ENCODE measurements at regions of chr2 and their contacts with region 1.

Region 1: GRCh38 chr2:96951093-96951654 is 35.2 kb downstream of the FAM178B start:
- DNase-seq: peak; percentile 56
- H3K4me3 ChIP-seq: no peak overlapping the region
- H3K27ac ChIP-seq: no peak overlapping the region
- H3K4me1 ChIP-seq: no peaks in the 10 kb centered on the region
- H3K27me3 ChIP-seq: peaks cover 0 to 7% of the 10 kb centered on the region in 2 experiments
- CTCF ChIP-seq: peak; percentile 85 to 94
- POLR2A ChIP-seq: no peak

Region 2: DNA sequence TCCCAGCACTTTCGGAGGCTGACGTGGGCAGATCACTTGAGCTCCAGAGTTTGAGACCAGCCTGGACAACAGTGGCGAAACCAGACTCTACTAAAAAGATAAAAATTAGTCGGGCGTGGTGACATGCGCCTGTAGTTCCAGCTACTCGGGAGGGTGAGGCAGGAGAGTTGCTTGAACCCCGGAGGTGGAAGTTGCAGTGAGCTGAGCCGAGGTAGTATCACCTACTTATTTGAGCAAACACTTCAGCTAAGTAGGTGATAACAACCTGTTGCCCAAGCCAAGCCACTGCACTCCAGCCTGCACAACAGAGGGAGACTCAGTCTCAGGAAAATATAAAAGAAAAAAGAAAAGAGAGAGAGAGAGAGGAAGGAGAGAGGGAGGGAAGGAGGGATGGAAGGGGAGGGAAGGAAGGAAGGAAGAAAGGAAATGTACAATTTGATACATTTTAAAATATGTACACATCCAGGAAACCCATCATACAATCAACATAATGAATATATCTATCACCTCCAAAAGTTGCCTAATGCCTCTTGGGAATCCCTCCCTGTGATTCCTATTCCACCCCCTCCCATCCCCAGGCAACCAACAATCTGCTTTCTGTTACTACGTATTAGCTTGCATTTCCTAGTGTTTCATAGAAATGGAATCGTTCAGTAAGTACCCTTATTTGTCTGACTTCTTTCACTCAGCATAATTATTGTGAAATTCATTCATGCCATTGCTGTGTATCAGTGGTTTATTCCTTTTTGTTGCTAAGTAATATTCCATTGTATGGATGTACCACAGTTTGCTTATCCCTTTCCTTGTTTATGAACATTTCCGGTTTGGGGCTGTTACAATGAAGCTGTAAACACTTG is 287.2 kb before region 1 on chr2:
- CTCF ChIA-PET with region 1: no interaction called
- POLR2A ChIA-PET with region 1: no interaction called
- dilution Hi-C with region 1: no loop called
- intact Hi-C with region 1: no loop called
- DNase-seq: no peak
- H3K4me3 ChIP-seq: no peak overlapping the region
- H3K27ac ChIP-seq: no peak overlapping the region
- H3K4me1 ChIP-seq: peaks cover 7% of the 10 kb centered on the region
- H3K27me3 ChIP-seq: no peaks in the 10 kb centered on the region
- CTCF ChIP-seq: no peak
- POLR2A ChIP-seq: no peak

Region 3: GRCh38 chr2:96868555-96869280 is 82.5 kb before region 1 on chr2:
- CTCF ChIA-PET with region 1: interaction called, 10 read pairs
- POLR2A ChIA-PET with region 1: no interaction called
- dilution Hi-C with region 1: no loop called
- intact Hi-C with region 1: no loop called
- DNase-seq: peak; percentile 82
- H3K4me3 ChIP-seq: peak overlapping the region; percentile 59 to 86 (median 65)
- H3K27ac ChIP-seq: no peak overlapping the region
- H3K4me1 ChIP-seq: peaks cover 34% of the 10 kb centered on the region
- H3K27me3 ChIP-seq: peaks cover 10 to 16% of the 10 kb centered on the region in 2 experiments
- CTCF ChIP-seq: peak; percentile 70 to 73
- POLR2A ChIP-seq: peak; percentile 75

Region 4: DNA sequence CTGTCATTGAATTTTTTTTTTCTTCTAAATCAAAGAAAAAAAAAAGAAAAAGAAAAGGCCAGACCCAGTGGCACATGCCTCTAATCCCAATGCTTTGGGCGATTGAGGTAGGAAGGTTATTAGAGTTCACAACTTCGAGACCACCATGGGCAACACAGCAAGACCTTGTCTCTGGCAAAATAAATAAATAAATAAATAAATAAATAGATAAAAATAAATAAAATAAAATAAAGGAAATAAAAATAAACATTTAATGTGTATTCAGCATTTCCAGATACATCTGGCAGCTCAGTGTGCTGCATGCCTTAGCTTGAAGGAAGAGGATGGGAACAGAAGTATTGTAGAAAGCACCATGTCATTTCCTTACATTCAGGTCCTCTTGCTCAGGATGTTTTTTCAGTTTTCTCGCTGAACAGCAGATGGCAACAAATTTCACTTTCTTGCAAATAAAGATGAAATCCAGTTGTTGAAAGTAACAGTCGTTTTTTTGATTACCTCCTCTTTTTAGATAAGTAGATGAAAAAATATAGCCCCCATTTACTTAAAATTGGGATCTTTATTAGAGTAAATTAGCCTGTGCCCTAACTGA is 60.9 kb after region 1 on chr2:
- CTCF ChIA-PET with region 1: no interaction called
- POLR2A ChIA-PET with region 1: no interaction called
- dilution Hi-C with region 1: no loop called
- intact Hi-C with region 1: no loop called
- DNase-seq: peak; percentile 72
- H3K4me3 ChIP-seq: no peak overlapping the region
- H3K27ac ChIP-seq: no peak overlapping the region
- H3K4me1 ChIP-seq: no peaks in the 10 kb centered on the region
- H3K27me3 ChIP-seq: peaks cover 8% of the 10 kb centered on the region in 2 experiments
- CTCF ChIP-seq: peak in 1 of 2 donors; percentile 31
- POLR2A ChIP-seq: no peak

Region 5: DNA sequence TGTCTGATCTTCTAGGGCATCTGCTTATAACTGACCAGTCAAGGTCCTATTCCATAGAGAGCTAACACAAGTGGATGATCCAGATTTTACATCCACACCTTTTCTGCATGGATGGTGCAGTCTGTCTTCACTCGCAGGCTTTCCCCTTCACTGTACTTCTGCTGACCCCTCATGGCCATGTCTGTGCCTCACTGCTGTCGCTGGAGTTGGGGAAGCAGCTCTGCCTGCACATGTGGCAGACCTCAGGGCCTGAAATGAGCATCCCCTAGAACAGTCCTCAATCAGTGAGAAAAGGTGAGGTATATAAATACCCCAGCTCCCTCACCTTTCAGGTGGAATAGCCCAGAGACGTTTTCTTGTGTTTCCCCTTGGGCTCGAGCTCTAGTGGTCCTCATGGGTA is 404.7 kb after region 1 on chr2:
- CTCF ChIA-PET with region 1: no interaction called
- POLR2A ChIA-PET with region 1: no interaction called
- dilution Hi-C with region 1: no loop called
- intact Hi-C with region 1: no loop called
- DNase-seq: no peak
- H3K4me3 ChIP-seq: no peak overlapping the region
- H3K27ac ChIP-seq: no peak overlapping the region
- H3K4me1 ChIP-seq: no peaks in the 10 kb centered on the region
- H3K27me3 ChIP-seq: peaks cover 36 to 62% of the 10 kb centered on the region in 2 experiments
- CTCF ChIP-seq: peak in 1 of 2 donors; percentile 6
- POLR2A ChIP-seq: no peak

Region 6: DNA sequence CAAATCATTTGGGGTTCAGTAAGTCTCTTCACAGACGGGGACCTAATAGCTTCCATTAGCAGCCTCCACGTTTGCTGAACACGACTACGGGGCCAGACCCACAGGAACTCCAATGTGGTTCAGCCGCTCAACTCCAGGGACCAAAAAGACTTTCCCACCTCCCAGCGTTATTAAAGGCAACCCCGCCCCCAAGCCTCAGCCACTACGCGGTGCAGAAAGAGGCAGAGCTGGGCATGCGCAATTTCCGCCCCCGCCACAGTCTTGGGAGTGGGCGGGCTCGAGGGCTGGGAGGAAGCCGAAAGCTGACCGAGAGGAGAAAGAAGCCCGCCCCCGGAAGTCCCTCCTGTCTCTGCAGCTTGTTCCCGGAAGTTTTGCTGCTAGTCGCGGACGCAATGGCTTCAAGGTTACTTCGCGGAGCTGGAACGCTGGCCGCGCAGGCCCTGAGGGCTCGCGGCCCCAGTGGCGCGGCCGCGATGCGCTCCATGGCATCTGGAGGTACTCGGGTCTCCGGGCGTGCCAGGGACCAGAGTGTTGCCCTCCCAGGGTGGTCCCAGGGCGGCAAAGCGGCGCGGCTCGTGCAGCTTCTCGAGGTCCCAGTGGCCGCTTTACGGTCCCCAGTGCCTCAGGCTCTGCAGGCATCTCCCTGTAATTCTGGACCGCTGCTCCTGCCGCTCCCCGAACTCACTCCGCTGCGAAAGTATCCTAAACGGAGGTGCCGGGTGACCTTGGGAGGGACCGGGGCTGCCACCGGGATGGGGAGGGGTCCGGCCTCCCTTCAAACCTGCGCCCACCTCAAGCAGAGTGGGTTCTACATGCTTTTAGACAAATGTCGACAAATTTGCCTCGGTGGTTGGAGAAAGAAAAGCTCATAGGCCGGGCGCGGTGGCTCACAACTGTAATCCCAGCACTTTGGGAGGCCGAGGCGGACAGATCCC is 694.8 kb after region 1 on chr2 and contains the start of gene COX5B:
- CTCF ChIA-PET with region 1: no interaction called
- POLR2A ChIA-PET with region 1: no interaction called
- dilution Hi-C with region 1: no loop called
- intact Hi-C with region 1: no loop called
- DNase-seq: peak; percentile 98
- H3K4me3 ChIP-seq: peak within 1 kb of the TSS; percentile 68 to 81 (median 77)
- H3K27ac ChIP-seq: peak within 1 kb of the TSS; percentile 69
- H3K4me1 ChIP-seq: peaks cover 15% of the 10 kb centered on the region
- H3K27me3 ChIP-seq: no peaks in the 10 kb centered on the region
- CTCF ChIP-seq: no peak
- POLR2A ChIP-seq: peak; percentile 91
- total RNA-seq, gene COX5B: 159 and 167 TPM in 2 replicates